ENCODE measurements at regions of chr17 and their contacts with region 1.

Region 1: DNA sequence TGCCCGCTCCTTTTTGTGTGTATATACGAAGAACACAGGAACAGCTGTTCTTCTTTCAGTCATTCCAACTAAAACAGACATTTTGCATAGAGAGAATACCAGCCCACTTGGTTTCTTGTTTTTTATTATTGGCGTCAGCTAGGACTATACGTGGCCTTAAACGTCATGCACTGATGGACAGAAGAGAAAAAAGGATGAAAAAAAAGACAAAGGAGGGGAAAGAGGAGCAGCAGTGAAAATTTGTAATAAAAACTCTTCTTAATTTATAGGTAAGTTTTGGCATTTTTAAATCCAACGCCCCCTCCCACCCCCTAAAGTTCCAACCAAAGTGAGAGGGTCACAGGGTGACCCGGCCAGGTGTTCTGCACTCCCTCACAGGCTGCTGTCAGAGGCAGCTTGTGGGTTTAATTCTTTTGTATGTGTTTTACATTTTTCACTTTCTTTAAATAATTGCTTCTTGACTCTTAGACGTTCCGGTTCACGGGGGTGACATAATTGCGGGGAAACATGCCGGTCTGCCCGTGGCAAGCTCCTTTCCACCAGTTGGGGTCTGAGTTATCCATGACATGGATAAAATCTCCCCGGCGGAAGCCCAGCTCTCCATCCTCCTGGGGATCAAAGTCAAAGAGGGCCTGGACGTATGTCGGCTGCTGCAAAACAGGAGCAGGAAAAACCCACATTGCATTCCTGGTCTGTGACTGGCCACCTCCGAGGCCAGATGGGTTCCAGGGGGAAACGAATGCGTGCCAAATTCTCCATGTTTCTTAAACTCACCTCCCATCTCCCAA is 30.9 kb upstream of the SLC25A19 start:
- DNase-seq: no peak
- H3K4me3 ChIP-seq: no peak overlapping the region
- H3K27ac ChIP-seq: no peak overlapping the region
- H3K4me1 ChIP-seq: peaks cover 9% of the 10 kb centered on the region
- H3K27me3 ChIP-seq: no peaks in the 10 kb centered on the region
- CTCF ChIP-seq: no peak
- POLR2A ChIP-seq: no peak

Region 2: GRCh38 chr17:75228305-75228704 is 91.8 kb before region 1 on chr17:
- CTCF ChIA-PET with region 1: no interaction called
- POLR2A ChIA-PET with region 1: no interaction called
- dilution Hi-C with region 1: no loop called
- intact Hi-C with region 1: no loop called
- DNase-seq: peak; percentile 57
- H3K4me3 ChIP-seq: no peak overlapping the region
- H3K27ac ChIP-seq: no peak overlapping the region
- H3K4me1 ChIP-seq: no peaks in the 10 kb centered on the region
- H3K27me3 ChIP-seq: no peaks in the 10 kb centered on the region
- CTCF ChIP-seq: no peak
- POLR2A ChIP-seq: no peak

Region 3: DNA sequence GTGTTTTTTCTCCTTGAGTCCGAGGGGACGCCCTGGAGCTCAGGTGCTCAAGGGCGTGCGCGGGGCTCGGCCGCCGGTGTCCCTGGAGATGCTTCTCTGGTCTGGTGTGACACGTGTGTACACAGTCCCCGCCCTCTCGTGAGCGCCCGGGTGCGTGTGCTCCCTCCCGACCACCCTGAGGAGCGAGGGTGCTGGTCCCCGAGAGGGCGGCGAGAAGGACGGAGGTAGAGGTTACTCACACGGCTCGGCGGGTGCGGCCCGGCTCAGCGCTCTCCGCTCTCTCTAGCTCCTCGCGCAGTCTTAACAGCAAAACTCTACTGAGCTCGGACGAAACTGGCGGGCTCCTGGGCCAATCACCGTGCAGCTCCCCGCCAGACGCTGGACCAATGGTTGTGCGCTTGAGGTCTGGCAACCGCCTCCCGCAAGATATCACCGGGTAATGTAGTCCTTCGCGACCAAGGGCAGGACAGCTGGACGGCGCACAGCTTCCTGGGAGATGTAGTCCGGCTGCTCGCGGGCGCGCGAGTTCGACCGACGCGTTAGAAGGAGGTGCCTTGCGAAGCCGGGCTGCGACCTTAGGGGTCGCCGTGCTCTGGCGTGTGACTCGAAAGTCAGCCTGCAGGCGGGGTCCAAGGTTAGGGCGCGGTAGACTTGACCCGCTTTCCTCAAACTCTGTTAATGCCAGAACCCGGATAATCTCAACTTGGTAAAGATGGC is 30.8 kb before region 1 on chr17 and contains the start of gene SLC25A19:
- CTCF ChIA-PET with region 1: interaction called, 10 read pairs
- POLR2A ChIA-PET with region 1: interaction called, 3 read pairs
- dilution Hi-C with region 1: no loop called
- intact Hi-C with region 1: no loop called
- DNase-seq: peak; percentile 100
- H3K4me3 ChIP-seq: peak within 1 kb of the TSS; percentile 66 to 85 (median 75)
- H3K27ac ChIP-seq: peak within 1 kb of the TSS; percentile 86
- H3K4me1 ChIP-seq: peaks cover 8% of the 10 kb centered on the region
- H3K27me3 ChIP-seq: no peaks in the 10 kb centered on the region
- CTCF ChIP-seq: no peak
- POLR2A ChIP-seq: peak; percentile 9
- total RNA-seq, gene SLC25A19: 16.8 and 20.9 TPM in 2 replicates

Region 4: DNA sequence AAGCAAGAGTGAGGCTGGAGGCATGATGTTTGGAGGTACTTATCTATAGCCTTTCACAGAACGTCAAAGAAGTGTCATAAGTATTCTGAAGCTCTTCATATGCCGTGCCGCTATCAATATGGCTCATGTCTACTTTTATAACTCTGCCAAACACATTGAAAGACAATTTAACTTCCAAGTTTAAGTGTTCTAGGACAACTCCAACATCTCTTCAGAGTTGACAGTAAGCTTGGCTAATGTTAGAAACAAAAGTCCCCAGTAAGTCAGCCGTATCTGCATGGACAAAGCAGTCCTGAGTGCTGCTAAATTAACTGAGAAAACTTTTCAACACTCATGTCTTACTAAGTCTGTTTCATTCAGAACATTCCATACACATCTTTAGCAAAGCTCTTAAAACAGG is 53.2 kb after region 1 on chr17:
- CTCF ChIA-PET with region 1: interaction called, 15 read pairs
- POLR2A ChIA-PET with region 1: interaction called, 13 read pairs
- dilution Hi-C with region 1: no loop called
- intact Hi-C with region 1: no loop called
- DNase-seq: no peak
- H3K4me3 ChIP-seq: no peak overlapping the region
- H3K27ac ChIP-seq: no peak overlapping the region
- H3K4me1 ChIP-seq: no peaks in the 10 kb centered on the region
- H3K27me3 ChIP-seq: no peaks in the 10 kb centered on the region
- CTCF ChIP-seq: no peak
- POLR2A ChIP-seq: no peak

Region 5: DNA sequence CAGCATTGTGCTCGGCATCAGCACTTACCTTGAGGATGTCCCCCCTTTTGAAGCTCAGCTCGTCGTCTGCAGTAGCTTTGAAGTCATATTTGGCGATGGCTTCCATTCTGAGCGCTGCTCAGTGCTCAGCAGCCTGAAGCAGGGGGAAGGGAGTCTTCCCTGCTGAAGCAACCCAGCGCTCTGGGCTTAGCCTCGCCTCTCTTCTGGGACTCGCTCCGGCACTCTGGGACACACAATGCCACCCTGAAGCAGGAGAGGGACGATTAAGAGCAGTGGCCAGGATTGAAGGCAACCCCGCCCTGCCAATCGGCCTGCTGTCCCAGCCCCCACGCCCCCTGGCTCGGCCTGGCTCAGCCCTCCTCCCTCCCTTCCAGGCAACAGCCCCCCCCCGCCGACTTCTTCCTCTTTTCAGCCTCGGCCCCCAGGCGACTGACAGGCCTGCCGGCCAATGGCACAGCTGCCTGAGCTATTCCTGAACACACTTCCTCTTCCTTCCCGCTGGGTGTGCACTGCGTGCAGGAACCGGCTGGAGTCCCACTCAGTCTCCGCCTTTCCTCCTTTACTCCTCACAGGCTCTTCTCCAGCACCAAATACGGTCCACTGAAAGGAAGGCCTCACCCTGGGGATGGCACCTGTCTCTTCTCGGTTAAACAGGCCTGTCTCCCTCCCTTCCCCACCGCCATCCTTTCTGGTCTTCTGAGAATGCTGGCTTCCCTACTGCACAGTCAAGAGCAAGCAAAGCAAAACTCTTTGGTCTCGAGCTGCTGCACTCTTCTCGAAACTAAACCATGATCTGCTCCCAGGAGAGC is 73.6 kb after region 1 on chr17:
- CTCF ChIA-PET with region 1: interaction called, 71 read pairs
- POLR2A ChIA-PET with region 1: interaction called, 11 read pairs
- dilution Hi-C with region 1: no loop called
- intact Hi-C with region 1: no loop called
- DNase-seq: peak; percentile 98
- H3K4me3 ChIP-seq: peak overlapping the region; percentile 73 to 77 (median 76)
- H3K27ac ChIP-seq: peak overlapping the region; percentile 59
- H3K4me1 ChIP-seq: peaks cover 26% of the 10 kb centered on the region
- H3K27me3 ChIP-seq: no peaks in the 10 kb centered on the region
- CTCF ChIP-seq: no peak
- POLR2A ChIP-seq: peak; percentile 93

Region 6: GRCh38 chr17:75405365-75406221 is 85.5 kb after region 1 on chr17 and contains the start of gene GRB2:
- CTCF ChIA-PET with region 1: interaction called, 178 read pairs
- POLR2A ChIA-PET with region 1: interaction called, 3 read pairs
- dilution Hi-C with region 1: no loop called
- intact Hi-C with region 1: loop called (anchors 1 kb)
- DNase-seq: peak; percentile 97
- H3K4me3 ChIP-seq: peak within 1 kb of the TSS; percentile 78 to 97 (median 96)
- H3K27ac ChIP-seq: peak within 1 kb of the TSS; percentile 54
- H3K4me1 ChIP-seq: peaks cover 12% of the 10 kb centered on the region
- H3K27me3 ChIP-seq: peaks cover 2% of the 10 kb centered on the region in 2 experiments
- CTCF ChIP-seq: no peak
- POLR2A ChIP-seq: peak; percentile 90
- total RNA-seq, gene GRB2: 93.9 and 94.8 TPM in 2 replicates

Region 7: GRCh38 chr17:75515496-75516254 is 195.6 kb after region 1 on chr17 and contains the start of gene CASKIN2:
- CTCF ChIA-PET with region 1: interaction called, 3 read pairs
- POLR2A ChIA-PET with region 1: no interaction called
- dilution Hi-C with region 1: no loop called
- intact Hi-C with region 1: loop called (anchors 1 kb)
- DNase-seq: peak; percentile 92
- H3K4me3 ChIP-seq: peak within 1 kb of the TSS; percentile 57 to 72 (median 70)
- H3K27ac ChIP-seq: peak within 1 kb of the TSS; percentile 59
- H3K4me1 ChIP-seq: peaks cover 46% of the 10 kb centered on the region
- H3K27me3 ChIP-seq: no peaks in the 10 kb centered on the region
- CTCF ChIP-seq: peak; percentile 100
- POLR2A ChIP-seq: no peak
- total RNA-seq, gene CASKIN2: 34.6 and 37.6 TPM in 2 replicates